Posterior vena cava (tissue), 2 donors: ENCODE measurements at regions of chr22 and their contacts with region 1.

Region 1: DNA sequence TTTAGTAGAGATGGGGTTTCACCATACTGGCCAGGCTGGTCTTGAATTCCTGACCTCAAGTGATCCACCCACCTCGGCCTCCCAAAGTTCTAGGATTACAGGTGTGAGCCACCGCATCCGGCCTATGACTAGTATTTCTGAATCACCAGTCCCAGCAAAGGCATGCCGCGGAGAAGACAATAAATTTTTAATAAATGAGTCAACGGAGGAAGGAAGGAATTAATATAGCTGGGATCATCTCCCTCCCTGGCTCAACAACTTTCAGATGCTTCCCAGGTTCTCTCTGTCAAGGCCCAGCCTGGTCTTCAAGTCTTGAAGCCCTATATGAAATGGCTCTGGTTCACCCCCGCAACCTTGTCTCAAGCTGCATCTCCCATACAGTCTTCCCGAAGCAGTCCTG is 45.7 kb downstream of the CYTH4 start:
- DNase-seq: no peak

Region 2: DNA sequence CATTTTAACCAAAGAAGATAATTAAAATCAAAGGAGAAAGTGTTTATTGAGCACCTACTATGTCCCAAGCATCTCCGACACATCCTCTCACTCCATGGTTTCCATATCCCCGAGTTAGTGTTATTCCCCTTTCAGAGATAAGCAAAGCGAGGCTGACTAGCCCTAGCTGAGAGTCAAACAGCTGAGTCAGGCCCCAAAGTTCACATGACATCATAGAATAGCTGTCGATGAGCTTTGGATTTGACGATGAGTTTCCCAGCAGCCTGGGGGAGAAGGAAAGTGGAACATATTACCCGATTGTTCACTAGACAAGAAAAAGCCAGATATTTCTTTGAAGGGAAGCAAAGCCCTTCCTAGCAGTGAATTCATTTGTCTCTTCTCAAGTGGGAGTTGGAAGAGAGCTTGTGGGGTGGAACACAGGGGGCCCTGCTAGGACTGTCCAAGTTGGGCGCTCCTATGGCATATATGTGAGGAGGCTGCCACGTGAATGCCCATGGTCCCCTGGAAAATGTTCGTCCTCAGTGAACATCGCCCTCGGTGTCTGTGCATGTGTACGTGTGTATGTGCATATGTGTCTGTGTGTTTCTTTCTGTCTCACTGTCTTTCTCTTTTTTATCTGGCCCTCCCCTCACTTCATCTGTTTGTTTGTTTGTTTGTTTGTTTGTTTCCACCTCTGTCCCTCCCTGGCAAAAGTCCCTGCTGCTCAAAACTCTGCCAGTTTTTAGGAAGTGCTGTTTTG is 46.2 kb before region 1 on chr22:
- intact Hi-C with region 1: loop called in 1 of 2 experiments (anchors 1 kb)
- DNase-seq: no peak

Region 3: DNA sequence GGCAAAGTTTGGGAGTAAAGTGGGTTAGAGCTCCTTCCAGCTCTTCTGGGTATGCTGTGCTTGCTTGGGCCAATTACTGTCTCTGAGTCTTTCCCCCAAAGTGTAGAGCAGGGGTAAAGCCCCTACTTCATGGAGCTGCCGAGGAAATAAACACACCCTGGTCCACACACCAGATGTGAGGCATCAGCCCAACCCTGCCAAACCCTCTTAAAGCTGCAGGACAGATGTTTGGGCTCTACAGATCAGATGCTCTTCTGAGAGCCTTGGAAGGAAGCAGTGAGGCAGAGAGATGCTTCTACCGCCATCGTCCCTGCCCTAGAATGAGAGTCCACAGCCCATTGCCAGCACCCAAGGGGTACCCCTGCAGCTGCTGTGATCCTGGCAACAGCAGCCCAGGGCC is 34.6 kb after region 1 on chr22:
- intact Hi-C with region 1: loop called in 1 of 2 experiments (anchors 2 kb)
- DNase-seq: no peak

Region 4: GRCh38 chr22:37462983-37463382 is 135.0 kb after region 1 on chr22:
- intact Hi-C with region 1: loop called in 1 of 2 experiments (anchors 10 kb)
- DNase-seq: no peak